Panc1 (cell line): ENCODE measurements at regions of chr18 and their contacts with region 1.

Region 1: DNA sequence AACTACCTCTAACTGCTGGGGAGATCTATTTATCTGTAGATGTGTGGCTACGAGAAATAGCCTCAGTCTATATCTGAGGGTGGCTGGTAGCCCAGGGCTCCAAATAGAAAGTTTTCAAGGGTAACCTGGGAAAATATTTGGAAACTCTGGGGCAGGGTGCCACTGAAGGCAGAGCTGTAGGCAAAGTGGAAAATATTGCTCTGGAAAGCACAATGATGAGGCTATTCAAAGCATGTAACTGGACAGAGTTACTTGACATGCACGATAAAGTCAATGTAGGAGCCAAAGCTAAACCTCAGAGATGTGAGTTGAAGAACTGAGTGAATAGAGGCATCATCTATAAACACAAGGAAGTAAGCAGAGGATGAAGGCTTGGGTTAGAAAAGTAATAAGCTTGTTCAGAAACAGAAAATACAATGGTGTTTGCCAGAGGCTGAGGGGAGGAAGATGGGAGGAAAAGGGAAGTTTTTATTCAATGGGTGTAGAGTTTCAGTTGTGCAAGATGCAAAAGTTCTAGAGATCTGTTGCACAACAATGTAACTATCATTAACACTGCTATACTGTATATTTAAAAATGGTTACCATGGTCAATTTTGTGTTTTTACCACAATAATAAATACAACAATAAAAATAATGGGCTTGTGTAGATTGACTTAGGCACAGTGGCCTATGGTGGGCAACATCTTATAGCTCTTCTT is 171.6 kb downstream of the MBD2 start:
- DNase-seq: no peak
- ATAC-seq: no peak
- H3K4me3 ChIP-seq: no peak overlapping the region
- H3K27ac ChIP-seq: no peak overlapping the region
- H3K4me1 ChIP-seq: no peaks in the 10 kb centered on the region
- H3K27me3 ChIP-seq: no peaks in the 10 kb centered on the region
- CTCF ChIP-seq: no peak

Region 2: DNA sequence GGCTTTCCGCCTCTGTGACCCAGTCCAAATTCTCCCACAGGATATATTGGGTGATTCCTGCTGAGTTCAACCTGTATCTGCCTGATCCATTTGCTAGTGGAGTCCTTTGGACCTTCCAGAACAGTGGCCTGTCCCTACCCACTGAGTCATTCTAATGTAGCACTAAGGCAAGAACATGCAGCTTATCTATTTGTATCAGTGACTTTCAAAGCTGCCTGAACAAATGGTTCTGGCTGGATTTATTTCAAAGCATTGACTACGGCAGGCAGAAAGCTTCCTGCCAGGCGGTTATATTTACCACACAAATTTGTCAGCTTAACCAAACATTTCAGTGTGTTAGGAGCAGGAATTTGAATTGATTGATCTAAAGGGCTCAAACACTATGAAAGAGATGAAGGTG is 1099.5 kb before region 1 on chr18:
- CTCF ChIA-PET with region 1: interaction called, 12 read pairs
- POLR2A ChIA-PET with region 1: no interaction called
- in situ Hi-C with region 1: no loop called
- intact Hi-C with region 1: no loop called
- DNase-seq: no peak
- ATAC-seq: no peak
- H3K4me3 ChIP-seq: no peak overlapping the region
- H3K27ac ChIP-seq: no peak overlapping the region
- H3K4me1 ChIP-seq: no peaks in the 10 kb centered on the region
- H3K27me3 ChIP-seq: no peaks in the 10 kb centered on the region
- CTCF ChIP-seq: no peak

Region 3: GRCh38 chr18:53894675-53895442 is 158.0 kb before region 1 on chr18:
- CTCF ChIA-PET with region 1: no interaction called
- POLR2A ChIA-PET with region 1: no interaction called
- in situ Hi-C with region 1: no loop called
- intact Hi-C with region 1: no loop called
- DNase-seq: no peak
- ATAC-seq: no peak
- H3K4me3 ChIP-seq: no peak overlapping the region
- H3K27ac ChIP-seq: no peak overlapping the region
- H3K4me1 ChIP-seq: no peaks in the 10 kb centered on the region
- H3K27me3 ChIP-seq: no peaks in the 10 kb centered on the region
- CTCF ChIP-seq: no peak

Region 4: DNA sequence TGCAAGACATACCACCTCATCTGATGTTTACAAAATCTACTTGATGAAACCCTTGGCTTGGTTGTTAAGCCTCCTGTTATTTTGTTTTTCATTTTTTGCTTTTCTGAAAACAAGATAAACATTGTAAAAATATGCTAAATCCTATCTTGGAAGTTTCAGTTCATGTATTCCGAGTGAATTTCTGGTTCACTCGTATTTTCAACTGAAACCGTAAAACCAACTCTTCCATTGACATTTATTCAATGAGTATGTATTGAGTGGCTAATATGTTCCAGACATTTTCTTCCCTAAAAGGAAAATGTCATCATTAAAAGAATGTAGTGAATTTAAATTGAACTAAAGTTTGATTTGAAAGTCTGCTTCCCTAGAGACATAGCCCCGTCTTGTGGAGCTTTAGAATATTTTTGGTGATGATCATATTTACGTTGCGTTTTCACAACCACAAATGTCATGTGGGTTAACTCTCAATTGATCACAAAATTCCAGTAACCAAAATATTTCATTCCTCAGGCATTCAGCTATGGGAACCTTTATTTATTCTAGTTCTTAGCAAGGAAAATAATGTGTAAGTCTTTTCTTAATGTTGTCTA is 32.6 kb before region 1 on chr18:
- CTCF ChIA-PET with region 1: no interaction called
- POLR2A ChIA-PET with region 1: no interaction called
- in situ Hi-C with region 1: no loop called
- intact Hi-C with region 1: no loop called
- DNase-seq: no peak
- ATAC-seq: no peak
- H3K4me3 ChIP-seq: no peak overlapping the region
- H3K27ac ChIP-seq: no peak overlapping the region
- H3K4me1 ChIP-seq: no peaks in the 10 kb centered on the region
- H3K27me3 ChIP-seq: no peaks in the 10 kb centered on the region
- CTCF ChIP-seq: no peak

Region 5: DNA sequence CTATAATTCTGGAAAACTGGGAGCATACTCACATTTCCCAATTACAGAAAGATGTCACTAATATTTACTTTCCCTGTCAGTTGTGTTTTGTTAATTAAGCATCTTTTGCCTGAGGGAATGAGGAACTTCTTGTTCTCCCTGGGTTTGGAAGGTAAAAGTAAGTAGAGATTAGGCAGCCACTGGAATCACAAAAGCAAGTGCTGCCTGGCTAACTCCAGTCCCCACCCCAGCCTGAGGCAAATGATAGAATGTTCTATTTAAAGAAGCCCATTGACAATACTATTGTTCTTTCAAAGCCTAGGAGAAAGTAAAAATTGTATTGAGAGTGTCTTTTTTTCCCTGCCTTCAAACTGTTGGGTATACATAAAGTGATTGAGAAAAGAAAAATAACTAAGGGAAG is 77.7 kb after region 1 on chr18:
- CTCF ChIA-PET with region 1: no interaction called
- POLR2A ChIA-PET with region 1: no interaction called
- in situ Hi-C with region 1: no loop called
- intact Hi-C with region 1: no loop called
- DNase-seq: no peak
- ATAC-seq: no peak
- H3K4me3 ChIP-seq: no peak overlapping the region
- H3K27ac ChIP-seq: no peak overlapping the region
- H3K4me1 ChIP-seq: no peaks in the 10 kb centered on the region
- H3K27me3 ChIP-seq: no peaks in the 10 kb centered on the region
- CTCF ChIP-seq: no peak

Region 6: GRCh38 chr18:54433857-54434256 is 381.0 kb after region 1 on chr18:
- CTCF ChIA-PET with region 1: no interaction called
- POLR2A ChIA-PET with region 1: no interaction called
- in situ Hi-C with region 1: no loop called
- intact Hi-C with region 1: no loop called
- DNase-seq: no peak
- ATAC-seq: no peak
- H3K4me3 ChIP-seq: no peak overlapping the region
- H3K27ac ChIP-seq: no peak overlapping the region
- H3K4me1 ChIP-seq: no peaks in the 10 kb centered on the region
- H3K27me3 ChIP-seq: no peaks in the 10 kb centered on the region; the same call in 1 of the 2 replicates
- CTCF ChIP-seq: no peak